ENCODE measurements at regions of chr12 and their contacts with region 1.

Region 1: GRCh38 chr12:48795480-48796455 is 6.9 kb upstream of the ADCY6 start:
- DNase-seq: peak; percentile 67
- ATAC-seq: peak; percentile 86
- H3K4me3 ChIP-seq: peak overlapping the region in 1 of 3 experiments; percentile 61; a peak in 2 of 6 replicates
- H3K27ac ChIP-seq: no peak overlapping the region
- H3K4me1 ChIP-seq: peaks cover 20% of the 10 kb centered on the region
- H3K27me3 ChIP-seq: peaks cover 2 to 9% of the 10 kb centered on the region in 2 experiments; a peak in 2 of 5 replicates
- CTCF ChIP-seq: peak; percentile 95
- EP300 ChIP-seq: no peak
- POLR2A ChIP-seq: no peak
- RAD21 ChIP-seq: peak; percentile 81

Region 2: GRCh38 chr12:48454667-48455066 is 341.1 kb before region 1 on chr12:
- CTCF ChIA-PET with region 1: no interaction called
- POLR2A ChIA-PET with region 1: no interaction called
- in situ Hi-C with region 1: no loop called
- intact Hi-C with region 1: no loop called
- DNase-seq: peak; percentile 5
- ATAC-seq: no peak
- H3K4me3 ChIP-seq: no peak overlapping the region
- H3K27ac ChIP-seq: no peak overlapping the region
- H3K4me1 ChIP-seq: no peaks in the 10 kb centered on the region
- H3K27me3 ChIP-seq: 0 out of 5 replicates have a peak, but pooled peaks cover 0 to 4% of the 10 kb centered on the region in 2 experiments
- CTCF ChIP-seq: peak; percentile 52
- EP300 ChIP-seq: no peak
- POLR2A ChIP-seq: no peak
- RAD21 ChIP-seq: no peak

Region 3: GRCh38 chr12:48542300-48542928 is 253.4 kb before region 1 on chr12:
- CTCF ChIA-PET with region 1: interaction called, 5 read pairs
- POLR2A ChIA-PET with region 1: no interaction called
- in situ Hi-C with region 1: no loop called
- intact Hi-C with region 1: loop called (anchors 1 kb)
- DNase-seq: peak; percentile 27
- ATAC-seq: peak; percentile 75
- H3K4me3 ChIP-seq: no peak overlapping the region
- H3K27ac ChIP-seq: no peak overlapping the region
- H3K4me1 ChIP-seq: no peaks in the 10 kb centered on the region
- H3K27me3 ChIP-seq: no peaks in the 10 kb centered on the region
- CTCF ChIP-seq: peak; percentile 80
- EP300 ChIP-seq: no peak
- POLR2A ChIP-seq: no peak
- RAD21 ChIP-seq: peak; percentile 69

Region 4: DNA sequence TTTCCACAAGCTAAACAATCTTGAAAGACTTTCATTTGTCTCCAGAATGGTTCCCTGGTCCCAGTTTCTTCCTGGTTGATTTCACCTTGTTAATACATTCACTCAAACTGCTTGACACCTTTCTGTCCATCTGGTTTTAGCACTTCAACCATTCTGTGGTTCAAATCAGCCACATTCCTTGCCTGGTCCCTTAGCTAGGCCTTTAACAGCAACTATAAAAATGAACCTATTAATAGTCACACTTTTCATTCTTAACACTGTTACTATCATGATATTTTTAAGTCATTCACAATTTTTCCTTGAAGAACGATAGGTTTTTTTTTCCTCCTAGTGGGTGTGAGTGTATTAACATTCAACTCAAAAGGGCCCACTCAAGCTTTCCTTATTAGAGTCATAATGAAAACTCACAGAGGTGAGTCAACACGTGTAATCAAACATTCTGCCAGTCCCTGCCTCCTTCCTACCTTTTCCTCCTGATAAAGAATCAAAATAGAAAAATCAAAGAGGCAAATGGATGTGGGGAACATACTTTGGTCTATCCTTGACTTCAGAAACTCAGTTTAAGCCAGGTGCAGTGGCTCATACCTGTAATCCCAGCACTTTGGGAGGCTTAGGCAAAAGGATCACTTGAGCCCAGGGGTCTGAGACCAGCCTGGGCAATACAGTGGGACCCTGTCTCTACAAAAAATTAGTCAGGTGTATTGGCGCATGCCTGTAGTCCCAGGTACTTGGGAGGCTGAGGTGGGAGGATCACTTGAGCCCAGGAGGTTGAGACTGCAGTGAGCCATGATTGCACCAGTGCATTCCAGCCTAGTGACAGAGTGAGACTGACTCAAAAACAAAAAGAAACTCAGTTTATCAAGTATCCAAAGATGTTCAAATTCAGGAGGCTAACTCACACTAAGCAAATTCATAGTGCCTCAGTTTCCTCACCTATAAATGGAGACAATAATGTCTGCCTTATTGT is 44.7 kb before region 1 on chr12:
- CTCF ChIA-PET with region 1: interaction called, 41 read pairs
- POLR2A ChIA-PET with region 1: interaction called, 7 read pairs
- in situ Hi-C with region 1: loop called (anchors 5 kb)
- intact Hi-C with region 1: loop called (anchors 1 kb)
- DNase-seq: no peak
- ATAC-seq: no peak
- H3K4me3 ChIP-seq: no peak overlapping the region
- H3K27ac ChIP-seq: no peak overlapping the region
- H3K4me1 ChIP-seq: 0 out of 2 replicates have a peak, but pooled peaks cover 9% of the 10 kb centered on the region
- H3K27me3 ChIP-seq: peaks cover 0 to 5% of the 10 kb centered on the region in 2 experiments; a peak in 2 of 5 replicates
- CTCF ChIP-seq: no peak
- EP300 ChIP-seq: no peak
- POLR2A ChIP-seq: no peak
- RAD21 ChIP-seq: no peak

Region 5: DNA sequence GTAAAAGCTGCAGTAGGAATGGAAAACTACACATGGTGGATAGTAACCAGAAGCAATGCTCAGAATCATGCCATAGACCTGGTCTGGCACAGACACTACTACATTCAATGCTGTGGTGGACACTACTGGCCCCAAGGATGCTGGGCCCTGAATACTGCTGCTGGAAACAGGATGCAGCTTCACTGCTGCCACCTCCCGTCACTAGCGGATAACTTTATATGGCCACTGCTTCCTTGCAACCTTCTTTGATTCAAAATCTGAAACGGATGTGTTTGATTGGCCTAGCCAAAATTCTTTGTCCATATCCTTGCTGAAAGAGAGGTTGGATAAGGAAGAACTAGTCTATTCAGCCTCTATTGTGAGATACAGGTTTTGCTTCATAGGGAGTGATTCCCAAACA is 37.5 kb before region 1 on chr12:
- CTCF ChIA-PET with region 1: interaction called, 41 read pairs
- POLR2A ChIA-PET with region 1: interaction called, 7 read pairs
- in situ Hi-C with region 1: loop called (anchors 5 kb)
- intact Hi-C with region 1: loop called (anchors 1 kb)
- DNase-seq: no peak
- ATAC-seq: peak; percentile 74
- H3K4me3 ChIP-seq: no peak overlapping the region
- H3K27ac ChIP-seq: no peak overlapping the region
- H3K4me1 ChIP-seq: 0 out of 2 replicates have a peak, but pooled peaks cover 1% of the 10 kb centered on the region
- H3K27me3 ChIP-seq: peaks cover 0 to 2% of the 10 kb centered on the region in 2 experiments; a peak in 1 of 5 replicates
- CTCF ChIP-seq: no peak
- EP300 ChIP-seq: no peak
- POLR2A ChIP-seq: no peak
- RAD21 ChIP-seq: no peak

Region 6: GRCh38 chr12:48965298-48965838 is 169.6 kb after region 1 on chr12:
- CTCF ChIA-PET with region 1: no interaction called
- POLR2A ChIA-PET with region 1: no interaction called
- in situ Hi-C with region 1: no loop called
- intact Hi-C with region 1: no loop called
- DNase-seq: no peak
- ATAC-seq: peak; percentile 49
- H3K4me3 ChIP-seq: no peak overlapping the region
- H3K27ac ChIP-seq: no peak overlapping the region
- H3K4me1 ChIP-seq: peaks cover 20% of the 10 kb centered on the region
- H3K27me3 ChIP-seq: peaks cover 2 to 55% of the 10 kb centered on the region in 2 experiments
- CTCF ChIP-seq: peak; percentile 45
- EP300 ChIP-seq: no peak
- POLR2A ChIP-seq: no peak
- RAD21 ChIP-seq: no peak

Measured in HepG2 (cell line).